ENCODE measurements at regions of chr9 and their contacts with region 1.

Region 1: GRCh38 chr9:7520396-7520795 is 279.2 kb downstream of the DMAC1 start:
- DNase-seq: no peak
- ATAC-seq: no peak
- H3K4me3 ChIP-seq: no peak overlapping the region
- H3K27ac ChIP-seq: no peak overlapping the region
- H3K4me1 ChIP-seq: peaks cover 0 to 5% (median 0%) of the 10 kb centered on the region in 9 donors
- H3K27me3 ChIP-seq: no peaks in the 10 kb centered on the region
- CTCF ChIP-seq: no peak

Region 2: GRCh38 chr9:7320139-7320538 is 200.3 kb before region 1 on chr9:
- intact Hi-C with region 1: loop called in 1 of 10 experiments (anchors 10 kb)
- DNase-seq: no peak
- ATAC-seq: peak in 3 of 8 donors; percentile 33 to 63 (median 50)
- H3K4me3 ChIP-seq: no peak overlapping the region
- H3K27ac ChIP-seq: peak overlapping the region in 1 of 10 donors; percentile 20
- H3K4me1 ChIP-seq: peaks cover 0 to 20% (median 10%) of the 10 kb centered on the region in 9 donors
- H3K27me3 ChIP-seq: no peaks in the 10 kb centered on the region
- CTCF ChIP-seq: no peak

Region 3: DNA sequence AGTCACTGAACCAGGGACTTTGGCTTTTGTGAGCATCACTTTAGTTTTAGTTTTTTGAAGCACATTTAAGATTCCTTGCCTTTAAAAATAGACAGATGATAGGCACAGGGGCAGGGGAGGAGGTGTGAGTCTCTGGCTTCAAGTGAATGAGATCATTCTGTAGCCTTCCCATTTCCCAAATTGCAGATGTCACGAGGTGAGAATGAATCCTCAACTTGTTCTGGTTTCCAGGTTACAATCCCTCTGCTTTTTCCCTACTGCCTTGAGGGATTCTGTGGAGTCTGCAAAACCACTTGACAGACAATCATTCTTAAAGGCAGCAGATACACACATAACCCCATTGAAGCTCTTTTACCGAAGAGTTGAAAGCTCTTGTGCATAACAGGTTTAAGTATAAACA is 53.2 kb before region 1 on chr9:
- intact Hi-C with region 1: loop called in 1 of 10 experiments (anchors 10 kb)
- DNase-seq: no peak
- ATAC-seq: no peak
- H3K4me3 ChIP-seq: no peak overlapping the region
- H3K27ac ChIP-seq: no peak overlapping the region
- H3K4me1 ChIP-seq: no peaks in the 10 kb centered on the region
- H3K27me3 ChIP-seq: no peaks in the 10 kb centered on the region
- CTCF ChIP-seq: no peak